ENCODE measurements at regions of chr19 and their contacts with region 1.

Region 1: DNA sequence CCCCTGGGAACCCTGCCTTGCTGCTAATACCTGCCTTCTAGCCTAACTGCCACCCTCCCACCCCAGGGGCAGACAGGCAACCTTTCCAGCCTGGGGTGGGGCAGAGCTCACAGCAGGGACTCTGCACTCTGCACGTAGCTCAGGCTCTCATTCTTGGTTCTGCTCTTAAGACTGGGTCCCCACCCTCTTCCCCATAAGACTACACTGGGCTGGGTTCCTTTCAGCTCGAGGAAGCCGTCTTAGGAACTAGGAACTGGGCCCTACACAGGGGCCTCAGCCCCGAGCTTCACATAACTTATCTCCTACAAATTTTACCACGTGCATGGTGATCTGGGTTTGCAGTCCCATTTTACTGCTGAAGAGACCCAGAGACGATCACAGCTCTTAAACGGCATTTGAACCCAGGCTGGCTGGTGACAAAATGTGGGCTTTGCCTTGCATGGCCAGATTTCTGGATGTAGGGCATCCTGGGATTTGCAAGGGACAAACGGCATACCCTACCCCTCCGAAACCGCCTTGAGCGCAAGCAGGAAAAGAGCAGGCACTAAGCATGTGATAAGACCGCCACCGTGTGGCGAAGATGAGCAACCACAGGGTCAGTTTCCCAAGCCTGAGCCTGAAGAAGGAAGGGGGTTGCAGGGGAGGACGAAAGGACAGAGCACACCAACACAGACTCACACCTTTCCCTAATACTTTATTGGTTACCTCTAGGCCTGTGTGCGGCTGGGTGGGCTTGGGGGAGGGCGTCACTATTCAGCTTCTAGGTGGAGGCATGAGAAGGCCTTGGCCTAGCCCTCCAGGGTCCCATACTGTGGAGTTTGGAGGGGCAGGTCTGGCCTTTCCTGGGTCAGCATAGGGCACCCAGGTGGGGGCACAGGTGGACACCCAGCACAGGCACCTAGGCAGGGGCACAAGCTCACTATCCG is 5.1 kb downstream of the JUNB start:
- DNase-seq: peak; percentile 59 to 92 (median 81)

Region 2: DNA sequence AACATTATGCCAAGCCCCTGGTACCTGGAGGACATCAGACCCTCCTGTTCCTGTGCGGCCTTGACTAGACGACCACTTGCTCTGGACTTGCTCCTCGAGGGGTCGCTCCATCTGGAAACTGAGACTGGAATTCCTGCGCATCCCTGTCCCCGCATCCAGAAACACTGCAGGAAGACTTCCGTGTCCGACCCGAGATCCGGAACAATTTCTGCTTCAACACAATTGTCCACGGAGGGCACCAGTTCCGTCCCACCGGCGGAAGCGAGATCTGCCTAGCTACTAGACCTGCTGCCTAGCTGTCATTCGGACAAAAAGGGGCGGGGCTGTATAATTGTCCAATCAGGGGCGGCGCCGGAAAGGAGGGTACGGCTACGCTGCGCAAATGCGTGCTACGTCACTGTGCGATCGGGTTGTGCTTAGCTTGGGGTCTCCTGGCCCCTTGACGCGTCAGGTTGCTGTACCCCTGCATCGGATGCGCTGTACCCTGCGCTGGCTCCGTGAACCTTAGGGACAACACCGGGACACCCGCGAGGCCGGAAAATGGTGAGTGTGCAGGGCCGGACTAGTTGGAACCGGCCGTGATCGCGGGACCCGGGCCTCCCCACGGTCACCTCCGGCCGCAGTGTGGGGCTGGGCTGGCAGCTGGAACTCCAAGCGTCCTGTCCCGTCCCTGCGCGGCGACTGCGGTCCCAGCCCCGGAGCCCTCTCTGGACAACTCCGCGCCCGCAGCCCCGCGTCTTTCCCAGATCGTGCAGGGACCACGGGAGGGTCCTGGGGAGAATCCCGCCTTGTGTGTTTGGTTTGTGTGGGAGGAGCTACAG is 185.7 kb before region 1 on chr19 and contains the starts of genes ZNF490 and ZNF791:
- intact Hi-C with region 1: no loop called
- DNase-seq: peak; percentile 96 to 100 (median 99)

Region 3: GRCh38 chr19:12766051-12766521 is 30.3 kb before region 1 on chr19:
- intact Hi-C with region 1: loop called (anchors 5 kb)
- DNase-seq: peak in 35 of 42 donors; percentile 65 to 93 (median 85)

Region 4: DNA sequence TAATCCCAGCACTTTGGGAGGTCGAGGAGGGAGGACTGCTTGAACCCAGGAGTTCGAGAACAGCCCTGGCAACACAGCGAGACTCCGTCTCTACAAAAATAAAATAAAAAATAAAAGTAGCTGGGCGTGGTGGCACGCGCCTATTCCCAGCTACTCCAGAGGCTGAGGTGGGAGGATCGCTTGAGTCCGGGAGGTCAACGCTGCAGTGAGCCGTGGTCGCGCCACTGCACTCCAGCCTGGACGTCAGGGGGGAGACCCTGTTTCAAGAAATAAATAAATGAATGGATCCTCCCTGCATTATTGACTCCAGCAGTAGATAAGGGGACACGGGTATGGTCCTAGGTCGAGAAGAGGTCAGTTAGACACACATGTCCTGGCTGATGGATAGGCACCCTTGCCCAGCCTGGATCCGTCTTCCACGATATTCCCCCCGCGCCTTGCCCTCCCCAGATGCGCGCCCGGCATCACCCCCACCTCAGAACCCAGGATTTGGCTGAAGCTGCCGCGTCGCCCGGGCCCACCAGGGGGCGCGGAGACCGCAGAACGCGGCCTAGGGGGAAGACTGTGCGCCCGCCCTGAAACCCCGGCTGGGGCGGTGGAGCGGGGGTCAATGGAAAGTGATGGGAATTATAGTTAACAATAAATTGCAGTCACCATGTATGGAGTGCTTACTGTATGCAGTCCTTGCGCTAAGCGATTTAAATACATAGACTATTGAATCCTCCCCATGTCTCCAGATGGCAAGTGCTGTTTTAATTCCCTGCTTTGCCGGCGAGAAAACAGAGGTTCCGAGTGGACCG is 19.0 kb before region 1 on chr19:
- intact Hi-C with region 1: loop called (anchors 2 kb)
- DNase-seq: peak; percentile 58 to 93 (median 86)